ENCODE measurements at regions of chr13 and their contacts with region 1.

Region 1: GRCh38 chr13:21458813-21459701 is at the start of gene ZDHHC20:
- H3K4me3 Mint-ChIP-seq: peak within 1 kb of the TSS; percentile 98
- H3K27ac Mint-ChIP-seq: peak within 1 kb of the TSS; percentile 97
- H3K4me1 Mint-ChIP-seq: peaks cover 20% of the 10 kb centered on the region
- H3K27me3 Mint-ChIP-seq: no peaks in the 10 kb centered on the region

Region 2: DNA sequence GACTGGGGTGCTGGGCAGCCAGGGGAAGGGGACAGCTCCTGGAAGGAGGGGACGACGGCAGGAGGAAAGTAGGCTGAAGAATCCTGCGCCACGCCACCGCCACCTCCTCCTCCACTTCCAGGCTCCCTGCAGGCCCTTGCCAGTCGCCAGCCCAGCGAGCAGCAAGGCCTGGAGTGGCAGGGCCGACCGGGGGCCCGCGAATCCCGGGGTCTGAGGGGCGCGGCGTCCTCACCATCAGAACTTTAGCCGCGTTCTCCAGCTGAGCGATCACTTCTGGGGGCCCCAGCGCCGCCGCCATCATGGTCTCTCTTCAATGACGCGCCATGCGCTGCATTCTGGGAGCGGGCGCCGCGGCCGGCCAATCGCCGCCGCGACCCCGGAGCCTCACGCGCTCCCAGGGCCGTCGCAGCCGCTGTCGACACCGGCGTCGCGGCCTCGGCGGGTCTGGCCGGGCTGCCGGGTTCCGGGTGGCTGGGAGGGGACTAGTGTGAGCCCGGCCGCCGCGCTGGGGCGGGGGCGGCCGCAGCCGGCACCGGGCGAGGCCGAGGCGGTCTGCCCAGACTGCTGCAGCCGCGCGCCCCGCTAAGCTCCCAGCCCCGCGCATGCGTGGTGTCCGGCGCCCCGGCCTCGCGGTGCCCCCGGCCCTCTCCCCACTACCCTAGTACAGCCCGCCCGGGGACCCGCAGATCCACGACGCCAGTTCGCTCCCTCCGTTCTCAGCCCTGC is 556.5 kb before region 1 on chr13 and contains the start of gene XPO4:
- intact Hi-C with region 1: loop called (anchors 5 kb)
- H3K4me3 Mint-ChIP-seq: peak within 1 kb of the TSS; percentile 87
- H3K27ac Mint-ChIP-seq: peak within 1 kb of the TSS; percentile 90
- H3K4me1 Mint-ChIP-seq: peaks cover 9% of the 10 kb centered on the region
- H3K27me3 Mint-ChIP-seq: peaks cover 4% of the 10 kb centered on the region

Region 3: GRCh38 chr13:21402586-21403228 is 56.4 kb before region 1 on chr13:
- intact Hi-C with region 1: loop called (anchors 5 kb)
- H3K4me3 Mint-ChIP-seq: no peak overlapping the region
- H3K27ac Mint-ChIP-seq: no peak overlapping the region
- H3K4me1 Mint-ChIP-seq: no peaks in the 10 kb centered on the region
- H3K27me3 Mint-ChIP-seq: no peaks in the 10 kb centered on the region

Region 4: DNA sequence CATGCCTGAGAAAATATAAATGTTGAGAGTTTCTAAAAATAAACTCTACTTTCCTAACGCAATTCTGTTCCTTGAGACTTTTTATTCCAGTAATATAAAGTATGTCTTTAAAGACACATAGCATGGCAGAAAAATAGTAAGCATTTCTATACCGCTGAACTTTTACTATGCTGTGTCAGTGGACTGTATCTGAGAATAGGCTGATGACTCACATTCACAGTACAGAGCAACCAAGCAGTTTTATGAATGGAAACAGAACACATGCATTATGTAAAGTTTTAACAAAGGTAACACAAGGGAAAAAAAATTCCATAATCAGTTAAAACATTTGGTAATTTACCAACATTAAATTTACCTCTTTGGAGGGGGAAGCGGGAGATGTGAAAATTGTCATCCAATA is 38.4 kb before region 1 on chr13:
- intact Hi-C with region 1: loop called (anchors 5 kb)
- H3K4me3 Mint-ChIP-seq: no peak overlapping the region
- H3K27ac Mint-ChIP-seq: no peak overlapping the region
- H3K4me1 Mint-ChIP-seq: peaks cover 13% of the 10 kb centered on the region
- H3K27me3 Mint-ChIP-seq: no peaks in the 10 kb centered on the region

Region 5: GRCh38 chr13:21435710-21436151 is 23.3 kb before region 1 on chr13:
- intact Hi-C with region 1: loop called (anchors 2 kb)
- H3K4me3 Mint-ChIP-seq: peak overlapping the region; percentile 49
- H3K27ac Mint-ChIP-seq: peak overlapping the region; percentile 91
- H3K4me1 Mint-ChIP-seq: peaks cover 43% of the 10 kb centered on the region
- H3K27me3 Mint-ChIP-seq: no peaks in the 10 kb centered on the region

Region 6: GRCh38 chr13:21476893-21477472 is 17.9 kb after region 1 on chr13:
- intact Hi-C with region 1: loop called (anchors 2 kb)
- H3K4me3 Mint-ChIP-seq: peak overlapping the region; percentile 87
- H3K27ac Mint-ChIP-seq: peak overlapping the region; percentile 89
- H3K4me1 Mint-ChIP-seq: peaks cover 17% of the 10 kb centered on the region
- H3K27me3 Mint-ChIP-seq: peaks cover 6% of the 10 kb centered on the region

Region 7: GRCh38 chr13:21557995-21558394 is 98.9 kb after region 1 on chr13:
- intact Hi-C with region 1: no loop called
- H3K4me3 Mint-ChIP-seq: no peak overlapping the region
- H3K27ac Mint-ChIP-seq: no peak overlapping the region
- H3K4me1 Mint-ChIP-seq: peaks cover 28% of the 10 kb centered on the region
- H3K27me3 Mint-ChIP-seq: no peaks in the 10 kb centered on the region